Prostate gland (tissue), 2 donors: ENCODE measurements at regions of chr13 and their contacts with region 1.

Region 1: DNA sequence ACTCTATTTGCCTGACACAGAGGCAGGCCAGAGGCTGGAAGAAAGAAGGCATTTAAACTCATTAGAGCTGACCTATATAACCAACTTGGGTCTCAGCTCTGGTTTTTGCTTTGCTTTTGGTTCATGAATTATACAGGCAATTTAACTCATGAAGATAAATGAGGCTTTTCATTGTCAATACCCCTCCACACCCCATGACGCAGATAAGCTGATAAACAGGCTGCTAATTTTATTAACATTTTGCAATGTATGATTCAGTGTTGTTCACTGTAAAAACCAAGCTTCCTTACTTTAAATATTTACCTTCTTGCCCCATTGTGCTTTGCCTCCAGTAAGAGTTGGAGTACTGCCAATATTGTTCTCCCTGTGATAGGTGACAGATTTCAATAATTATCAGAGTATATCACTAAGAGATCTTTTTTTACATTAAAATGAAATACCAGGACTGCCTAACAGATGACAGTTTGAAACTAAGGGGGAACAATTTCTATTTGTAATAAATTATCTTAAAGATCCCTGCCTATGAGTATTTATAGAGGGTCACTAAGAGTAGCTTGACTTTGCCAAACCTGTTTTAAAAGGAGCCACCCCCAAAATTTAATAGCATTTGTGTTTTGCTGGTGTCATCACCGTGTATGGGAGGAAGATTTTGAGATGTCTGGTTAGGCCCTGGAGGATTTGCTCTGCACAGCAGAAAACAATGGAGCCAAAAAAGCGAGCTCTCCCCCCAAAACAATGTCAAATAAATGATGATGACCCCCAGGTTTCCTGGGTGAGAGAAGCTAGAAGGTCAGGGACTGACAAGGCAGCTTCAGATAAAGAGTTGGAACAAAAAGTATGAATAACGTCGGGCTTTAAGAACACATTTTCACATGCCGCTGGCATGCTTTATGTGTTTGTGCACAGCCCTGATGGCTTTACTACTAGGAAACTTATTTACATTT is 472.6 kb upstream of the NBEA start:
- DNase-seq: peak; percentile 7
- H3K4me3 ChIP-seq: no peak overlapping the region
- H3K27ac ChIP-seq: peak overlapping the region in 1 of 2 donors; percentile 20
- H3K4me1 ChIP-seq: no peaks in the 10 kb centered on the region
- H3K27me3 ChIP-seq: no peaks in the 10 kb centered on the region
- CTCF ChIP-seq: no peak
- POLR2A ChIP-seq: no peak

Region 2: GRCh38 chr13:34513526-34513925 is 44.1 kb after region 1 on chr13:
- intact Hi-C with region 1: loop called (anchors 5 kb)
- DNase-seq: no peak
- H3K4me3 ChIP-seq: no peak overlapping the region
- H3K27ac ChIP-seq: no peak overlapping the region
- H3K4me1 ChIP-seq: no peaks in the 10 kb centered on the region
- H3K27me3 ChIP-seq: no peaks in the 10 kb centered on the region
- CTCF ChIP-seq: no peak
- POLR2A ChIP-seq: no peak

Region 3: DNA sequence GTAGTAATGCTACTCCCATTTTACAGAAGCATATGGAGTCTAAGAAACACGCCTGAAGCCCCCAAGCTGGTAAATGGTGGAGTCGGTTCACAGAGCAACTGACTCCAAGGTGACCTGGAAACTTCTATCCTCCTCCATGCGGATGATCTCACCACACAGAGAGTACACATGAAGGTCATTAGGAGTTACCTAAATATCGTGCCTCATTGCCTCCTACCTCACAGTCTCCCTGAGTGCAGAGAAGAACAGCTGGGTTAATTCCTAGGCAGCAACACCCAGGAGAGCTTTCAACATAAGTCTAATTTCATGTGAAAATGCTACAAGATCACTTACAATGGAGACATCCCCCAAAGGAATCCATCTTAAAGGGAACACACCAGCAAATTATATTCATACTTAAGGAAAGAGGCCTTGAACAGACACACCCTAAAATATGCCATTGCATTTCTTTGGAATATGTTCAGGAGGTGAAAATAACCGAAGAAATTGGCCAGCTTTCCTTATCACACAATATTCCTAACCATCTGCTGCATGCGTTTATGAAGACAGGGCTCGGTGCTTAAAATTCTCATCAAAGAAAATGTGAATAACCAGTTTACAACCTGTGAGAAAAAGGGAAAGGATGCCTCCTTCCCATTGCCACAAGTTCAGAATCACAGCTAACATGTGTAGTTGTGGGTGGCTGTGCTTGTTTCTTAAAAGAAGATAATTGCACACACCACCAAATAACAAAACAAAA is 268.9 kb after region 1 on chr13:
- intact Hi-C with region 1: no loop called
- DNase-seq: no peak
- H3K4me3 ChIP-seq: no peak overlapping the region
- H3K27ac ChIP-seq: no peak overlapping the region
- H3K4me1 ChIP-seq: no peaks in the 10 kb centered on the region
- H3K27me3 ChIP-seq: no peaks in the 10 kb centered on the region
- CTCF ChIP-seq: no peak
- POLR2A ChIP-seq: no peak